Colonic mucosa (tissue), 4 donors: ENCODE measurements at regions of chr4 and their contacts with region 1.

Region 1: DNA sequence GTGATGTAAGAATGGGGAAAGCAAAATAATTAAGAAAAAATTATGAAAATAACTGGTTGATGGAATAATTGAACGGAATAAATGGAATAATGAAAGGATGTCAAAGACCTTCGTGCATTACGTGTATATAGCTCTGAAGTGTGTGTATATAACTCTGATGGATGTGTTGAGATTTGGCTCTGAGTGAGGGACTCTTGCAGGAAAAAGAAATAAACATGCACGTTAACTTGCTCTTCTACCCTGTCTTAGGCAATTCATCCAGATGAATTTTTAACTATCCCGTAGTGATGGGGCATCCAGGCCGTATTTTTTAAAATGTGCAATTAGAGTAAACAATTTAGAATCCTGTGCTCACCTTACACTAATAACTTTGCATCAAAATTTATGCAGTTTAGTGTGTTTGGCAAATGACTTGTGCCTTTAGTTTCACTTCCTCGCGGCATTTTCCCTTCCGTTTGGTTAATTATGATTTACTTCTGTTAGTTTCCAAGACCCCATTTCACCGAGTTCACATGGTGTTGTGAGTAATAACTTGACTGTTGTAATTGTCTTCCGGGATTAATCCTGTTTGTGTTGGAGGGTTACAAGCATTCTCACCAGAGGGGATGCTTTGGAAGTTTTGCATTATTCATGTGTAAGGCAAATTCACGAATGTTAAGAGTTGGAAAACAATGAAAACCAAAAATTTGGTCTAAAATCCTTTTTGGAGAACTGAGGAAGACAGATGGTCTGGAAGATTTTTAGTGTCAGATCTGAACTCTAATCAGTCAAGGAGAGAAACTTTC is 256.5 kb upstream of the FAT1 start:
- DNase-seq: no peak
- H3K4me3 ChIP-seq: no peak overlapping the region
- H3K27ac ChIP-seq: no peak overlapping the region
- H3K4me1 ChIP-seq: no peaks in the 10 kb centered on the region
- H3K27me3 ChIP-seq: no peaks in the 10 kb centered on the region
- CTCF ChIP-seq: no peak

Region 2: DNA sequence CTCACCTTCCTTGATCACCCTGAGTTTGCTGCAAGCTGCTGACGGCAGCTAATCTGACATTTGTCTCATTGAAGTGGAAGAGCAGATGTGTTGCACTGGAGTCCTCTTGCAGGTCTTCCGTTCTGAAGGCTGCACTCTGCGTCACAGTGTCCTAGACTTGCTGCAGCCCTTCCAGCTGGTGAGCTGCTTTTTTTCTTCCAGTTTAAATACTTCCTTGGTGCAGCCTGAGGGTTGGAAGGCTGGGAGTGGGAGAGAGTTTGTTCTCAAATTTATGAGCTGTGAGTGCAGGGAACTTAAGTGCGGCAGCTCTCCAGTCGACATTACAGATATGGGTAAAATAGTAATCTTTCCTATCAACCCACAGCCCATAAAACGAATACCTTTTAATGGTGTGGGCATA is 47.1 kb after region 1 on chr4:
- intact Hi-C with region 1: no loop called
- DNase-seq: no peak
- H3K4me3 ChIP-seq: no peak overlapping the region
- H3K27ac ChIP-seq: no peak overlapping the region
- H3K4me1 ChIP-seq: no peaks in the 10 kb centered on the region
- H3K27me3 ChIP-seq: no peaks in the 10 kb centered on the region
- CTCF ChIP-seq: no peak

Region 3: DNA sequence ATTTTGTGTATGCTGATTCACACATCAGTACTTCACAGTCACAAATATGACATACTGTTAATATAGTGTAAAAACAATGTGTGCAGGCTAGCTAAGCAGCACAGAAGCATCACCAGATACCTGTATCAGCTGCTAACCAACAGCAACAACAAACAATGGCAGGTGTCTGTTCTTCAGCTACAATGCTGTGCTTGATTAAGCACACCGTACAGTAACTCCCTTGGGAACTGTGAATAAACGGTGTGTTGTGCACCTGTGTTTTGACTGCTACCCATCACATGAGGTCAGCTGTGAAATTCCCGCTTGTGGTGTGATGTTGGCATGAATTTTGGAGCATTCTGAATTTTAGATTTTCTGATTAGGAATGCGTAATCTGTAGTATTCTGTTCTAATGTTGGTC is 123.2 kb after region 1 on chr4:
- intact Hi-C with region 1: loop called (anchors 10 kb)
- DNase-seq: no peak
- H3K4me3 ChIP-seq: no peak overlapping the region
- H3K27ac ChIP-seq: no peak overlapping the region
- H3K4me1 ChIP-seq: no peaks in the 10 kb centered on the region
- H3K27me3 ChIP-seq: no peaks in the 10 kb centered on the region
- CTCF ChIP-seq: no peak